MCF 10A (cell line): ENCODE measurements at regions of chr2 and their contacts with region 1.

Region 1: GRCh38 chr2:60707750-60708371 is 48.2 kb upstream of the PAPOLG start:
- DNase-seq: peak; percentile 65
- H3K4me3 Mint-ChIP-seq: no peak overlapping the region
- H3K27ac Mint-ChIP-seq: no peak overlapping the region
- H3K4me1 Mint-ChIP-seq: peaks cover 11% of the 10 kb centered on the region
- H3K27me3 Mint-ChIP-seq: no peaks in the 10 kb centered on the region
- CTCF ChIP-seq: peak; percentile 63

Region 2: DNA sequence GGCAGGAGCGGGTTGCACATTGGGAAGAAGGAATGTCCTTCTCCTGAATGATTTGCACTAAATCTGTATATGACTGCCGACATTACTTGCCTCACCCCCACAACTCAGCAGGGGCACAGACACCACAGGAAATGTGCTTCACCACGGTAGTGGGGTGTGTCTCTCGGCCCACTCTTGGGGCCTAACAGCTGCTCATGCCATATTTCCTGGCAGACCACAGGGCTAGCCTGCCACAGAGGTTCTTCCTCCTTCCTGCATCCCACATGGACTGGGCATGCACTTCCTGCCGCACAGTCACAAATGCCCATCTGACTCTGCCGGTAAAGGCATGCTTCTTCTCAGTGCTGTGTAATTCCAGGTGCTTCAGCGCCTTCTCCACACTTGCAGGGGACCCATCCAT is 37.9 kb after region 1 on chr2:
- CTCF ChIA-PET with region 1: interaction called, 39 read pairs
- POLR2A ChIA-PET with region 1: interaction called, 5 read pairs
- intact Hi-C with region 1: no loop called
- DNase-seq: no peak
- H3K4me3 Mint-ChIP-seq: no peak overlapping the region
- H3K27ac Mint-ChIP-seq: no peak overlapping the region
- H3K4me1 Mint-ChIP-seq: no peaks in the 10 kb centered on the region
- H3K27me3 Mint-ChIP-seq: no peaks in the 10 kb centered on the region
- CTCF ChIP-seq: no peak

Region 3: GRCh38 chr2:60764736-60765534 is 57.1 kb after region 1 on chr2:
- CTCF ChIA-PET with region 1: interaction called, 68 read pairs
- POLR2A ChIA-PET with region 1: interaction called, 5 read pairs
- intact Hi-C with region 1: no loop called
- DNase-seq: peak; percentile 37
- H3K4me3 Mint-ChIP-seq: no peak overlapping the region
- H3K27ac Mint-ChIP-seq: no peak overlapping the region
- H3K4me1 Mint-ChIP-seq: no peaks in the 10 kb centered on the region
- H3K27me3 Mint-ChIP-seq: no peaks in the 10 kb centered on the region
- CTCF ChIP-seq: no peak

Region 4: GRCh38 chr2:60771508-60771907 is 63.6 kb after region 1 on chr2:
- CTCF ChIA-PET with region 1: interaction called, 14 read pairs
- POLR2A ChIA-PET with region 1: interaction called, 5 read pairs
- intact Hi-C with region 1: no loop called
- DNase-seq: no peak
- H3K4me3 Mint-ChIP-seq: no peak overlapping the region
- H3K27ac Mint-ChIP-seq: no peak overlapping the region
- H3K4me1 Mint-ChIP-seq: no peaks in the 10 kb centered on the region
- H3K27me3 Mint-ChIP-seq: no peaks in the 10 kb centered on the region
- CTCF ChIP-seq: no peak